GM12878 (cell line): ENCODE measurements at regions of chr6 and their contacts with region 1.

Region 1: GRCh38 chr6:32971581-32972352 is 3.4 kb downstream of the BRD2 start:
- DNase-seq: peak; percentile 100
- ATAC-seq: peak; percentile 46
- H3K4me3 ChIP-seq: peak overlapping the region; percentile 93
- H3K27ac ChIP-seq: peak overlapping the region; percentile 100
- H3K4me1 ChIP-seq: peaks cover 1% of the 10 kb centered on the region; the same call in 1 of the 2 replicates
- H3K27me3 ChIP-seq: no peaks in the 10 kb centered on the region
- CTCF ChIP-seq: no peak
- EP300 ChIP-seq: peak; percentile 37; a peak in 2 of 4 replicates
- POLR2A ChIP-seq: peak; percentile 70
- RAD21 ChIP-seq: no peak

Region 2: DNA sequence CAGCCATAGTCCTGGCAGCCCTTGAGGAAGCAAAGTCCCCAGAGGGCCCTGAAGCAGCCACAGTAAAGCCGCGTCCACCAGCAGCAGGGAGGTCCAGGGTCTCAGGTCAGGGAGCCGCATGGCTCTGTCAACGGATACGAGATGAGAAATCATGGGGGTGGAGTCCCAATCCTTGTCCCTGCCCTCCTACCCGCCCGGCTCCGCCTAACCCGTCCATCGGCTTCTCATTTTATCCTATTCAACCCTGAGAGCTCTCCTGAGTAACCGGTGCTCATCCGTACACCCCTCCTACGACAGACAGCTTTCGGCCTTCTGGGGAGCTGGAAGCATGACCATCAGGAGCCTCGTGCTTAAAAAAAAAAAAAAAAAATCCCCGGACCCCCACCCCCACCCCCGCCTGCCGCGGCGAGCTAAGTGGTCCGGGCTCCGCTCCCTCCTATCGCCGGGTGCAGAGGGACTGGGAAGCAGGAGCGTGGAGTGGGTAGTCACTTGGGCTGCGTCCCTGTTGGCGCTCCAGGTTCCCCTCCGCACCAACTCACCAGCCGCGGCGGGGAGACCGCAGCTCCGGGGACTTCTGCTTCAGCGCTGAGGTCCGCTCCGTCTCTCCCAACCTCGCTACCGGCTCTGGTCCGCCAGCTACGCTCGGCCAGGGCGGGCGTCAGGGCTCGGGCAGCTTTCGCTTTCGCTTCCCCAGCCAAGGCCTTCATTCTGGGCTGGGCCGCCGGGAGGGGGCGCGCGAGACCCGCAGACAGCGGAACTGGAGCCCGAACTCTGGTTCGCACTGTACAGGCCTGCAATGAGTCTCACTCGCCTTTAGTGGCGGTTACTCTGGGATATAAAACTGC is 133.4 kb before region 1 on chr6 and contains the start of gene TAP2:
- CTCF ChIA-PET with region 1: interaction called, 17 read pairs
- POLR2A ChIA-PET with region 1: interaction called, 19 read pairs
- RAD21 ChIA-PET with region 1: interaction called, 29 read pairs
- SMC1A ChIA-PET with region 1: interaction called, 13 read pairs
- in situ Hi-C with region 1: no loop called
- intact Hi-C with region 1: loop called (anchors 5 kb)
- DNase-seq: no peak
- ATAC-seq: peak; percentile 85
- H3K4me3 ChIP-seq: peak within 1 kb of the TSS; percentile 95
- H3K27ac ChIP-seq: peak within 1 kb of the TSS; percentile 75
- H3K4me1 ChIP-seq: peaks cover 60% of the 10 kb centered on the region
- H3K27me3 ChIP-seq: no peaks in the 10 kb centered on the region
- CTCF ChIP-seq: peak; percentile 89 to 97 (median 96); a peak in 5 of 6 replicates
- EP300 ChIP-seq: no peak
- POLR2A ChIP-seq: peak; percentile 86
- RAD21 ChIP-seq: peak; percentile 98
- polyA plus RNA-seq, gene TAP2: 5.3 to 6.7 TPM

Region 3: GRCh38 chr6:32885698-32886286 is 86.0 kb before region 1 on chr6:
- CTCF ChIA-PET with region 1: interaction called, 15 read pairs
- POLR2A ChIA-PET with region 1: interaction called, 4 read pairs
- RAD21 ChIA-PET with region 1: interaction called, 4 read pairs
- SMC1A ChIA-PET with region 1: interaction called, 8 read pairs
- in situ Hi-C with region 1: no loop called
- intact Hi-C with region 1: no loop called
- DNase-seq: peak; percentile 23
- ATAC-seq: peak; percentile 83
- H3K4me3 ChIP-seq: no peak overlapping the region
- H3K27ac ChIP-seq: no peak overlapping the region
- H3K4me1 ChIP-seq: 0 out of 2 replicates have a peak, but pooled peaks cover 3% of the 10 kb centered on the region
- H3K27me3 ChIP-seq: no peaks in the 10 kb centered on the region; a peak in 1 of 4 replicates
- CTCF ChIP-seq: peak; percentile 38 to 61 (median 43); a peak in 5 of 6 replicates
- EP300 ChIP-seq: no peak
- POLR2A ChIP-seq: no peak
- RAD21 ChIP-seq: peak; percentile 83

Region 4: DNA sequence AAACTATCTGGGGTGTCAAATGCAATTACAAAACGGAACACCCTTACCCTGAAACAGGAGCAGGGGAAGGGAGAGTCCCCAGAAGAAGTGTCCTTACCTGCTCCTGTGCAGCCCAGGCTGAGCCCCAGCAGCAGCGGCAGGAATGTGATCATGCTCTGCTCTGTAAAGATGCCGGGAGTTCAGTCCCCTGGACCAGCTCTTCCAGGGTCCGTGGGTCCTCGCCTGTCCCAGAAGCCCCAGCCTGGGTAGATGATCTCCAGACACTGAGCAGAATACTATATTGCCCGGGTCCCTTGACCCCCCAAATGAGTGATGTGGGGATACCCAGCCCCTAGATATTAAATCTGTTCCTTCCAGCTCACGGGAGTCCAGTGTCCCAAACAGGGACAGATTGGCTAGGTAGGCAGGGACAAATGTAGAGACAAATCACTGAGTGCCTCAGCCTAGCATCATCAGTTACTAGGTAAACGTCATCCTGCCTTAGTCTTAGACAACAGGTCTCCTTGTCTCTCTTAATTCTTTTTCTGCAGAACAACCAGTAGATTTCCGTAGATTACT is 31.0 kb before region 1 on chr6 and contains the start of gene HLA-DMB:
- CTCF ChIA-PET with region 1: interaction called, 39 read pairs
- POLR2A ChIA-PET with region 1: interaction called, 270 read pairs
- RAD21 ChIA-PET with region 1: interaction called, 116 read pairs
- SMC1A ChIA-PET with region 1: interaction called, 120 read pairs
- in situ Hi-C with region 1: no loop called
- intact Hi-C with region 1: no loop called
- DNase-seq: peak; percentile 97
- ATAC-seq: peak; percentile 74
- H3K4me3 ChIP-seq: peak within 1 kb of the TSS; percentile 79
- H3K27ac ChIP-seq: peak within 1 kb of the TSS; percentile 96
- H3K4me1 ChIP-seq: peaks cover 41% of the 10 kb centered on the region
- H3K27me3 ChIP-seq: no peaks in the 10 kb centered on the region
- CTCF ChIP-seq: no peak
- EP300 ChIP-seq: no peak
- POLR2A ChIP-seq: peak; percentile 71
- RAD21 ChIP-seq: no peak
- polyA plus RNA-seq, gene HLA-DMB: 117 to 170 TPM

Region 5: GRCh38 chr6:33008944-33009861 is 37.4 kb after region 1 on chr6 and contains the start of gene HLA-DOA:
- CTCF ChIA-PET with region 1: interaction called, 3 read pairs
- POLR2A ChIA-PET with region 1: interaction called, 6 read pairs
- RAD21 ChIA-PET with region 1: interaction called, 15 read pairs
- SMC1A ChIA-PET with region 1: interaction called, 4 read pairs
- in situ Hi-C with region 1: no loop called
- intact Hi-C with region 1: no loop called
- DNase-seq: peak; percentile 75
- ATAC-seq: peak; percentile 98
- H3K4me3 ChIP-seq: peak within 1 kb of the TSS; percentile 100
- H3K27ac ChIP-seq: peak within 1 kb of the TSS; percentile 75
- H3K4me1 ChIP-seq: peaks cover 15% of the 10 kb centered on the region
- H3K27me3 ChIP-seq: no peaks in the 10 kb centered on the region
- CTCF ChIP-seq: no peak
- EP300 ChIP-seq: no peak
- POLR2A ChIP-seq: peak; percentile 93
- RAD21 ChIP-seq: no peak
- polyA plus RNA-seq, gene HLA-DOA: 8.8 to 21.1 TPM

Region 6: GRCh38 chr6:34656378-34657036 is 1684.7 kb after region 1 on chr6:
- CTCF ChIA-PET with region 1: no interaction called
- POLR2A ChIA-PET with region 1: no interaction called
- RAD21 ChIA-PET with region 1: no interaction called
- SMC1A ChIA-PET with region 1: no interaction called
- in situ Hi-C with region 1: loop called (anchors 25 kb)
- intact Hi-C with region 1: no loop called
- DNase-seq: peak; percentile 97
- ATAC-seq: peak; percentile 89
- H3K4me3 ChIP-seq: peak overlapping the region; percentile 58; the same call in 1 of the 2 replicates
- H3K27ac ChIP-seq: peak overlapping the region; percentile 100
- H3K4me1 ChIP-seq: peaks cover 60% of the 10 kb centered on the region
- H3K27me3 ChIP-seq: no peaks in the 10 kb centered on the region
- CTCF ChIP-seq: no peak
- EP300 ChIP-seq: peak; percentile 95 to 98
- POLR2A ChIP-seq: peak; percentile 57
- RAD21 ChIP-seq: peak; percentile 19; the same call in 1 of the 2 replicates